WTC11 (cell line): ENCODE measurements at regions of chr20 and their contacts with region 1.

Region 1: DNA sequence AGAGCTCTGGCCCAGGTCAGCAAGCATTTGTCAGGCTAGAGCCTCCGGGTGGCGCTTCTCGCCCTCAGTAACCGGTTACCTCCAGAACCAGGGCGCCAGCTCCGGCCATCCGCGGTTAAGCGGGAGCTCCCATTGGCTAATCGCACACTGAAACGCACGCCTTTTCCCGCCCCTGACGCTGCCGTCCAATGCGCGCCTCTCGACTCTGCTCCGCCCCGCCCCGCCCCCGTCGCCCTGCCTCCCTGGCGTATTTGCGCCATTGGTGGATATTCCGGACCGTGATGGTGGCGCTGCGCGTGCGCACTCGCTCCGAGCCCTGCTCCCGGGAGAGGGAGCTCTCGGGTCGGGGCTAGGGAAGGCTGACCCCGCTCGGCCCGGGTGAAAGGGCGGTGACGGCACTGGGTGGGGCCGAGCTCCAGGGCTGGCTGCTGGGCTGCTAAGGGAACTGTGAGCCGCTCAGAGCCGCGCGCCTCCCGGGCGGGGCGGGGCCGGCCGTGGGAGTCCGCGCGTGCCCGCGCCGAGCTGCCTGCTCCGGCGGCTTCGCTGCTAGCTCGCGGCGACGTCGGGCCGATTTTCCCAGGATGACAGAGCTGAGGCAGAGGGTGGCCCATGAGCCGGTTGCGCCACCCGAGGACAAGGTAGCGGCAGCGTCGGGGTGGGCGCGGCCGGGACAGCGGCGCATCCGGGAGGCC is at the start of gene CDS2:
- DNase-seq: peak; percentile 100
- ATAC-seq: peak; percentile 90
- H3K4me3 Mint-ChIP-seq: peak within 1 kb of the TSS; percentile 87
- H3K27ac Mint-ChIP-seq: peak within 1 kb of the TSS; percentile 93
- H3K4me1 Mint-ChIP-seq: peaks cover 23% of the 10 kb centered on the region
- H3K27me3 Mint-ChIP-seq: no peaks in the 10 kb centered on the region
- CTCF ChIP-seq: no peak
- total RNA-seq, gene CDS2: 49.1 to 56.6 TPM (median 54.9 TPM) in 3 replicates

Region 2: DNA sequence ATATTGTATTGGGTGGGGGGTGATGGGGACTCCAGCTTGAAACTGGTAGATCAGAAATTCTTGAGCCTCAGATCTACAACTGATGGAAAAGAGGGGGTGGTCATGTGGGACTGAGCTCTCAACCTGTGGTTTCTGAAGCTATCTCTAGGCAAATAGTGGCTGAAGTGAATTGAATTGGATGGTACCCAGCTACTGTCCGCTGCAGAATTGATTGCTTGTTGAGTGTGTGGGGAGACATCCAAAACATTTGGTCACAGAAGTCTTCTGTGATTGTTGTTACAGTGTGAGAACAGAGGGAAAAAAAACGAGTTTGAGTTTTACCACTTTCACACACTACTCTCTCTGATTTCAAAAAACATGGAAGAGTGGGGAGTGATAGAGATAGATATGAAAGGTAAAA is 15.0 kb after region 1 on chr20:
- CTCF ChIA-PET with region 1: interaction called, 16 read pairs
- POLR2A ChIA-PET with region 1: no interaction called
- DNase-seq: no peak
- ATAC-seq: no peak
- H3K4me3 Mint-ChIP-seq: no peak overlapping the region
- H3K27ac Mint-ChIP-seq: 0 out of 2 replicates have a peak overlapping the region, but pooled peaks have one; percentile 22
- H3K4me1 Mint-ChIP-seq: peaks cover 2% of the 10 kb centered on the region
- H3K27me3 Mint-ChIP-seq: no peaks in the 10 kb centered on the region
- CTCF ChIP-seq: no peak

Region 3: DNA sequence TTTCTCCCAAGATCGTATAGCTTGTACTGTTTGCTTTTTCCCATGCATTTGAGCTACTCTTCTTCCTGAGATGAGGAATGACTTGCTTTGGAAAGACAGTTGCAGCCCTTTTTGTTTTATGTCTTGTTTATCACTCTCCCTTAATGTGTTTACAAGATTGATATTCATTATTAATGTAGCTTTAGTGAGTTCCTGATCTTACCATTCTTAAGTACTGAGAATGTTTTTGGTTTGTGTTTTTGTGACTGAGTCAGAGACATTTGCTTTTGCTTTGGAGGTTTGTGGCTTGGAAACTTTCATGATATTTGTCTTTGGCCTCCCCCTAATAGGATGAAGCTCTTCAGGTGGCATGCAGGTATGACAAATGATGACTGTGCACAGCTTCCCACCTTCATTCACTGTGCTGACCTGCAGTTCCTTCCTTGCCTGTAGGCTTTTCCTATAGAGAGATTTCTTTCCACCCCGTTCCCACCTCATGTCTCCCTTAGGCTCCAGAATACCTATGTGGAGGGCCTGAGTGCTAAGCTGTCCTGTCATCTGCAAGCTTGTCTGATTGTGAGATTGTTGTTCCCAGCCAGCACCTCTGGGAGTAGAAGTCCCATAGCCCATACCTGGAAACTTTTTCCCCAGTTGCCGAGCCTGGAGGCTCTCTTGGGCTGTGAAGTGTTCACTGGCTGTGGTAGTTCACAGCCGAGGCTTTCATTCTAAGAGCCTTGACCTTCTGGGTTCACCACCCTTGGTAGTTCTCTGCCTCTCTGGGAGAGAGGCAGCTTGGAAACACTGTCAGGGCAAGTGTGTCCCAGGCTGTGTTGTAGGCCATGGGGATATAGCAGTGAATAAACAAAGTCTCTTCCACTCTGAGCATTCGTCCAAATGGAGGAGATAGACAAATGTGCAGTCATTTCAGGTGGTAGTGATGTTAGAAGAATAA is 27.2 kb after region 1 on chr20:
- CTCF ChIA-PET with region 1: interaction called, 13 read pairs
- POLR2A ChIA-PET with region 1: no interaction called
- DNase-seq: no peak
- ATAC-seq: peak; percentile 53
- H3K4me3 Mint-ChIP-seq: no peak overlapping the region
- H3K27ac Mint-ChIP-seq: peak overlapping the region; percentile 46
- H3K4me1 Mint-ChIP-seq: peaks cover 31% of the 10 kb centered on the region
- H3K27me3 Mint-ChIP-seq: no peaks in the 10 kb centered on the region
- CTCF ChIP-seq: no peak

Region 4: GRCh38 chr20:5181492-5181891 is 54.8 kb after region 1 on chr20:
- CTCF ChIA-PET with region 1: interaction called, 30 read pairs
- POLR2A ChIA-PET with region 1: interaction called, 5 read pairs
- DNase-seq: no peak
- ATAC-seq: no peak
- H3K4me3 Mint-ChIP-seq: no peak overlapping the region
- H3K27ac Mint-ChIP-seq: no peak overlapping the region
- H3K4me1 Mint-ChIP-seq: peaks cover 25% of the 10 kb centered on the region
- H3K27me3 Mint-ChIP-seq: no peaks in the 10 kb centered on the region
- CTCF ChIP-seq: no peak

Region 5: GRCh38 chr20:5205348-5206210 is 78.9 kb after region 1 on chr20:
- CTCF ChIA-PET with region 1: interaction called, 36 read pairs
- POLR2A ChIA-PET with region 1: no interaction called
- DNase-seq: peak; percentile 87
- ATAC-seq: peak; percentile 100
- H3K4me3 Mint-ChIP-seq: no peak overlapping the region
- H3K27ac Mint-ChIP-seq: no peak overlapping the region
- H3K4me1 Mint-ChIP-seq: peaks cover 3% of the 10 kb centered on the region; the same call in 1 of the 2 replicates
- H3K27me3 Mint-ChIP-seq: no peaks in the 10 kb centered on the region
- CTCF ChIP-seq: peak; percentile 80

Region 6: DNA sequence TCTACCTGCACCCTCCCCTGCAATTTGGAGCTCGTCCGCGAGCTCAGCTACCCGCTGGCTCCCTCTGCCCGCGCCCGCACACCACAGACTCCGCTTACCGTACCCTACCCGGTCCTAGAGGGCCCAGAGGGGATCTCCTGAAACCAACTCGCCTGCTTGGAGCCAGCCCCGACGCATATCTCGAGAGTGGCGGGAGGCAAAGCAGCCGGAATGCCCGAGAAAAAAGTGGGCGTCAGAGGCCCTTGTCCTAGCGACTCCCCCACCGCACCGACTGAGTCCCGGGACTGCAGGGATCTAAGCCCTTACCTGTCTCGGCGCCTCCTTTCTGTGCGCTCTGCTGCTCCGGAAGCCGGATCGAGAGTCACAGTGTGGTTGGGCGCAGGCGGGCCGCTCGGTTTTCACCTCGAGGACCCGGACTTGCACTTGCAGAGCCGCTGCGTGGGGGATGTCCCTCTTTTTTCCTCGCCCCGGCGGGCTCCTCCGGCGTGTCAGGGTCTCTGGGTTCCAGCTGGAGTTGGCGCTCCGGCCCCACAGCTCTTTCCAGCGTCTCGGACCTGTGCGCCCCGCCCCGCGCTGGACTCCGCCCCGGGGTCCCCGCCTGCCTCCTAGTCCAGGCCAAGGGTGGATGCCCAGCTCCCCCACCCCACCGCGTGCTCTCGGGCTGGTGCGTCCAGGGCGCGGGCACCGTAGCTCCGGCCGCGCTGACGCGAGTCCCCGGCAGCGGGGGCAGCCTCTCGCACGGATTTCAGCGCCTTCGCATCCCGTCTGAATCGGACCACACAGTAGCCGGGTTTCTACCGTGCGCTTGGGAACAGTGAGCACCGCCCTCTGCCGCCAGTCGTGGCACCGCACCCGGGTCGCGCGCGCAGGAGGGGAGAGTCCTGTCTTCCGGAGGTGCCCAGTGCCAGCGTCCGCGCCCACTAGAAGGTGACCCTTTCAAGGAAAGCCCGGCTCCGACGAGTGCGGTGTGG is 189.8 kb after region 1 on chr20 and contains the start of gene PROKR2:
- CTCF ChIA-PET with region 1: interaction called, 12 read pairs
- POLR2A ChIA-PET with region 1: interaction called, 3 read pairs
- DNase-seq: peak; percentile 80
- ATAC-seq: peak; percentile 74
- H3K4me3 Mint-ChIP-seq: peak within 1 kb of the TSS; percentile 89
- H3K27ac Mint-ChIP-seq: no peak within 1 kb of the TSS
- H3K4me1 Mint-ChIP-seq: peaks cover 15% of the 10 kb centered on the region
- H3K27me3 Mint-ChIP-seq: peaks cover 59% of the 10 kb centered on the region
- CTCF ChIP-seq: no peak
- total RNA-seq, gene PROKR2: 1.5 to 2.6 TPM (median 2.0 TPM) in 3 replicates